Left cardiac atrium (tissue), 4 donors: ENCODE measurements at regions of chr12 and their contacts with region 1.

Region 1: DNA sequence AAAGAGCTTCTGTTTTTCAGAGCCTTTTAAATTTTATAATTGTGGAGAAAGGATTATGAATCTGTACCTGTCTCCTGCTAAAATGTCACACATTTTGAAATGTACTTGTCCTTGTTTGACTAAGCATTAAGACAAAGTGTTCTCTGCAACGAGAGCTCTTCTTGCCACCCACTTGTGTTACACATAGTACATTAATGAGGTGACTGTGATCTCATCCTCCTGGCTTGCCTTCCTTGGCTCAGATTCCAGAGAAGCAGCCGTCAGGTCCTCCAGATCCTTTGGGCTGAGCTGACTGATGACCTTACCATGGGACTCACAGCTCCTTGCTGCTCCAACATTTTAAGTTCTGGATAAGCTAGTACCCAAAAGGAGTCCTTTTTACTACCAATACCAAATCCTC is 81.4 kb downstream of the BBS10 start:
- DNase-seq: peak; percentile 51
- ATAC-seq: peak; percentile 94 to 98

Region 2: GRCh38 chr12:76083904-76084862 is 182.6 kb before region 1 on chr12 and contains the start of gene NAP1L1:
- intact Hi-C with region 1: loop called in 1 of 2 experiments (anchors 10 kb)
- DNase-seq: peak; percentile 99
- ATAC-seq: peak; percentile 95 to 97
- total RNA-seq, gene NAP1L1: 299 to 358 TPM